GM10248 (cell line): ENCODE measurements at regions of chr18 and their contacts with region 1.

Region 1: GRCh38 chr18:45677276-45677807 is 46.6 kb upstream of the SLC14A1 start:
- DNase-seq: no peak
- CTCF ChIP-seq: no peak

Region 2: GRCh38 chr18:45690975-45691815 is 13.9 kb after region 1 on chr18:
- CTCF ChIA-PET with region 1: interaction called, 10 read pairs
- POLR2A ChIA-PET with region 1: no interaction called
- DNase-seq: peak; percentile 72
- CTCF ChIP-seq: peak; percentile 86

Region 3: GRCh38 chr18:46917108-46917802 is 1239.9 kb after region 1 on chr18 and contains the starts of genes KATNAL2 and PIAS2:
- CTCF ChIA-PET with region 1: no interaction called
- POLR2A ChIA-PET with region 1: no interaction called
- DNase-seq: peak; percentile 89
- CTCF ChIP-seq: peak; percentile 24